HEK293 (cell line): ENCODE measurements at regions of chr17 and their contacts with region 1.

Region 1: DNA sequence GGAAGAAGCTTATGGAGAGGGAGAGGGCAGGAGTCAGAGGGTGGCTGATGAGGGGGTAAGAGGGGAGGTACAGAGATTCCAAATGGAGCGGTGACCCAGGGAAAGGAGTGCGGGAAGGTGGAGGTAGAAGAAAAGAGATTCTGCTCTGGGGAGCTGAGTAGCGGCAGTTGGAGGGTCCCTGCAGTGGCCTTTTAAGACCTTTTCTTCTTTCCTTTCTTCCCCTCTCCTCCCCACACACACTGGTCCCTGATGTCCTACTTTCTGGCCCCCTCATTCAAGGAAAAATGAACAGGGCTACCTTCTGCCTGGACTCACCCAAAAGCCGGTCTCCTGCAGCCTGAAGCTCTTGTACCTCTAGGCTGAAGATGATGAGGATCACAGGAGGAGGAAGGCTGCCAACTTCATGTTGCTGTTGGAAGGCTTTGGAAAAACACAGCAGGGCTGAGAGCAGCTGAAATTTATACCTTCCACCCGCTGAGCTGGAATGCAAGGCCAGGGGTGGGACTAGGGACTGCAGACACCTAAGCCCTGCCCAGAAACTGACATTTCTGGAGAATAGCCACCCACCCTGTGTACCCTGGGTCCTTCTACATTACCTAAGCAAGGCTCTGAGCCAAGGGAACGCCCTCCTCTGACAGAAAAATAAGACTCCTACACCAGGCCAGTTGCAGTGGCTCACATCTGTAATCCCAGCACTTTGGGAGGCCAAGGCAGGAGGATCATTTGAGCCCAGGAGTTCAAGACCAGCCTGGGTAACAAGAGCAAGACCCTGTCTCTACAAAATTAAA is 9.4 kb upstream of the HEATR6 start:
- H3K4me3 ChIP-seq: no peak overlapping the region; the same call in 1 of the 2 replicates
- H3K27ac ChIP-seq: peak overlapping the region; percentile 7; the same call in 1 of the 2 replicates
- H3K4me1 ChIP-seq: peaks cover 19% of the 10 kb centered on the region
- CTCF ChIP-seq: no peak

Region 2: GRCh38 chr17:60077672-60078519 is 10.2 kb before region 1 on chr17:
- CTCF ChIA-PET with region 1: interaction called, 5 read pairs
- POLR2A ChIA-PET with region 1: interaction called, 34 read pairs
- H3K4me3 ChIP-seq: peak overlapping the region; percentile 79
- H3K27ac ChIP-seq: peak overlapping the region; percentile 85; the same call in 1 of the 2 replicates
- H3K4me1 ChIP-seq: peaks cover 13% of the 10 kb centered on the region
- CTCF ChIP-seq: no peak

Region 3: GRCh38 chr17:60110563-60110962 is 22.5 kb after region 1 on chr17:
- CTCF ChIA-PET with region 1: no interaction called
- POLR2A ChIA-PET with region 1: no interaction called
- H3K4me3 ChIP-seq: no peak overlapping the region
- H3K27ac ChIP-seq: no peak overlapping the region
- H3K4me1 ChIP-seq: no peaks in the 10 kb centered on the region
- CTCF ChIP-seq: no peak

Region 4: DNA sequence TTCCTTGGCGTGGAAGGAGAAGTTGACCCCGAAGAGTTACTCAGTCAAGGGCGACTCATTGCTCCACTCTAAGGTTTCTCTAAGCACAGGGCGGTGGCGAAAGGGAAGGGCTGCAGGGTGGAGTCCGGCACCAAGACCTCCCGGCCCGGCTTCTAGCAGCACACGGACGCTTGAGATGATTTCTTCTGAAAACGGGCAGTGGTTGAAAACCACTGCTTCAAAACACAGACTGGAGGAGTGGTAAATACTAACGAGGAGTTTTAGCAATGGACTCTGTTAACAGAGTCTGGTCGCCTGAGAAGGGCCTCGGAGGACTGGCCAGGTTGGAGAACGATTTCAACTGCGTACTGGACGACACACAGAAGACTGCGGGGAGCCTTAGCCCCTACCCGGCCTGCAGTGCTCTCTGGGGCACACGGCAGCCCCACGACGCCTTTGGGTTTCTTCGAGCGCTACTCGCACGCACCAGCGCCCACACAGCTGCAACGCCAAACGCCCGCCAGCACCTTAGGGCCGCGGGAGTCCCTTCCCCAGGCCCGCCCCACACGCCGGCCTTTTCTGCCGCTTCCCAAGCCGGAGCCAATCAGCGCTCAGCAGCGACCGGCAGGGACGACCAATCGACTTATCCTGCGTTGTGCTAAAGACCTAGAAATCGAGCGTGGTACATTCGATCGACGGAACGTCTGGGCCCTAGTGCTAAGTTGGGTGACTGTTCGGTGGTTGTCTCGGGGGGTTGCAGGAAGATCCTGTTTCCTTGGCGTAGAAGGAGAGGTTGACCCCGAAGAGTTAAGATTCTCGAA is 47.3 kb after region 1 on chr17:
- CTCF ChIA-PET with region 1: no interaction called
- POLR2A ChIA-PET with region 1: no interaction called
- H3K4me3 ChIP-seq: peak overlapping the region; percentile 51
- H3K27ac ChIP-seq: peak overlapping the region; percentile 58; the same call in 1 of the 2 replicates
- H3K4me1 ChIP-seq: 0 out of 2 replicates have a peak, but pooled peaks cover 2% of the 10 kb centered on the region
- CTCF ChIP-seq: no peak

Region 5: GRCh38 chr17:60154616-60155426 is 66.7 kb after region 1 on chr17:
- CTCF ChIA-PET with region 1: no interaction called
- POLR2A ChIA-PET with region 1: no interaction called
- H3K4me3 ChIP-seq: no peak overlapping the region
- H3K27ac ChIP-seq: no peak overlapping the region
- H3K4me1 ChIP-seq: no peaks in the 10 kb centered on the region
- CTCF ChIP-seq: no peak